ENCODE measurements at regions of chr5 and their contacts with region 1.

Region 1: DNA sequence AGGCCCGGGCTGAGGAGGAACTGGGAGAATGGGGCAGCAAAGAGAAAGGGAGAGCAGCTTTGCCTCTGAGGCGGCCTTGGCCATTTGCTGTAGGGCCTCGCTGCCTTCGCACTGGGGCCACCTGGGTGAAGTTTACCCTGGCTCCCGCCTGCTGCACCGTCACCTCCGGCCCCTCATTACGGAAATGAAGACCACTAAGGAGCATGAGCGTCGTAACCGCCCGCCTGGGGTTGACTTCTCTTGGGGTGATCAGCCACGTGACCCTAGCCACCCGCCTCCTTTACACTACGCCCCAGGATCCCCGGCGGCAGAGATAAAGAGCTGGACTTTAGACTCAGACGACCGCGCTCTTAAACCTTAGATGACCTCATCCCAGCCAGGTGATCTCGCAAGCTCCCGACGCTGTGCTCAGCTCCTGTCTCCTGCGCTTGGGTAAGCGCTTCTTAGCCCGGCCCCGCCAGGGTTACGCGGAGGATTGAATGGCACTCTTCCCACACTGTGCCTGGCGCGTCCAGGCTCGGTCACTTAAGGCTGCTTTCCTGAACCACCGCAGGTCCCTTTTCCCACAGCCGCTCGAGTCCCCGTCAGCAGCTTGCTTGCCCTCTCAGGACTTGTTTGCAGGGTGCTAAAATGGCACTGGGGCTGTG is 107.9 kb upstream of the LARP1 start:
- DNase-seq: peak; percentile 34 to 73
- H3K4me3 ChIP-seq: peak overlapping the region; percentile 11 to 53 (median 38); a peak in 7 of 8 replicates
- H3K27ac ChIP-seq: no peak overlapping the region
- H3K4me1 ChIP-seq: peaks cover 0 to 9% (median 5%) of the 10 kb centered on the region in 4 experiments; a peak in 4 of 7 replicates
- H3K27me3 ChIP-seq: peaks cover 0 to 19% (median 12%) of the 10 kb centered on the region in 4 experiments; a peak in 5 of 7 replicates
- CTCF ChIP-seq: no peak
- EP300 ChIP-seq: no peak
- POLR2A ChIP-seq: peak in 1 of 2 experiments; percentile 58; a peak in 1 of 3 replicates
- RAD21 ChIP-seq: no peak

Region 2: DNA sequence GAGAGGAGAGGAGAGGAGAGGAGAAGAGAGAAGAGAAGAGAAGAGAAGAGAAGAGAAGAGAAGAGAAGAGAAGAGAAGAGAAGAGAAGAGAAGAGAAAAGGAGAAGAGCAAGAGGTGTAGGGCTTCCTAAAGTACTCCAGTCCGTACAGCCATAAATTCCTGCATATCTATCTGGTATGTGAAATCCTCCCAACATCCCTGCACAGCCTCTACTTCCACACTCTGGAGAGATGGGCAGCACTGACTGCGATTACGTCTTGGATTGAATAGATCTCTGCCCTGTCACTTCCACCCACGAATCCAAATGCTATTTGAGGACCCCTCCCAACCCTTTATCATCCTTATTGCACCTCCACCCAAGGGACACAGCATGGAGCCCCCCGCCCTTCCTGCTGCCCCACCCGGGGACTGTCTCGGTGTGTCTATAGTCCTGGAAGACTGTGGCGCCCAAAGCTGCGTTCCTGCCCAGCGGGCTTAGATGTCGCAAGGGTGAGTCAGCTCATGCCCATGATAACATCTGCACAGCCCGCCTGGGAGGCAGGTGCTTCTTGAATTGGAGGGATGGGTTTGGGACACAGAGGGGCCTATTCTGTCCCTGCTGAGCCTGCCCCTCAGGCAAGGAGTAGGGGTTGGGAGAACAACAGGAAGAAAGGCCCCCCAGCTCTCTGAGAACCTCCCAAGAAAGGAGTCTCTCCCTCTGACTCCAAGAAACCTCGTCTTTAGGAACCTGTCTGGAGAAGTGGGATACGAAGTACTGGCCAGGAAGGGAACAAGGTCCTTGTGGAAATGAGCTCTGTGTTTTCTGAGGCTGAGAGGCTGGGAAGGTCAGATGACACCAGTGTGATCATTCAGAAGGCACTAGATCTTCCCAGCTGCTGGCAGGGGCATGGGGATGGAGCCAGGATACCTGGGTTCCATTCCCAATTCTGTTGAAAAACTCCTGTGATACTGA is 63.4 kb before region 1 on chr5:
- CTCF ChIA-PET with region 1: no interaction called
- POLR2A ChIA-PET with region 1: no interaction called
- DNase-seq: no peak
- H3K4me3 ChIP-seq: no peak overlapping the region
- H3K27ac ChIP-seq: no peak overlapping the region
- H3K4me1 ChIP-seq: peaks cover 0 to 2% (median 0%) of the 10 kb centered on the region in 4 experiments; a peak in 1 of 7 replicates
- H3K27me3 ChIP-seq: no peaks in the 10 kb centered on the region
- CTCF ChIP-seq: no peak
- EP300 ChIP-seq: no peak
- POLR2A ChIP-seq: no peak
- RAD21 ChIP-seq: no peak

Region 3: DNA sequence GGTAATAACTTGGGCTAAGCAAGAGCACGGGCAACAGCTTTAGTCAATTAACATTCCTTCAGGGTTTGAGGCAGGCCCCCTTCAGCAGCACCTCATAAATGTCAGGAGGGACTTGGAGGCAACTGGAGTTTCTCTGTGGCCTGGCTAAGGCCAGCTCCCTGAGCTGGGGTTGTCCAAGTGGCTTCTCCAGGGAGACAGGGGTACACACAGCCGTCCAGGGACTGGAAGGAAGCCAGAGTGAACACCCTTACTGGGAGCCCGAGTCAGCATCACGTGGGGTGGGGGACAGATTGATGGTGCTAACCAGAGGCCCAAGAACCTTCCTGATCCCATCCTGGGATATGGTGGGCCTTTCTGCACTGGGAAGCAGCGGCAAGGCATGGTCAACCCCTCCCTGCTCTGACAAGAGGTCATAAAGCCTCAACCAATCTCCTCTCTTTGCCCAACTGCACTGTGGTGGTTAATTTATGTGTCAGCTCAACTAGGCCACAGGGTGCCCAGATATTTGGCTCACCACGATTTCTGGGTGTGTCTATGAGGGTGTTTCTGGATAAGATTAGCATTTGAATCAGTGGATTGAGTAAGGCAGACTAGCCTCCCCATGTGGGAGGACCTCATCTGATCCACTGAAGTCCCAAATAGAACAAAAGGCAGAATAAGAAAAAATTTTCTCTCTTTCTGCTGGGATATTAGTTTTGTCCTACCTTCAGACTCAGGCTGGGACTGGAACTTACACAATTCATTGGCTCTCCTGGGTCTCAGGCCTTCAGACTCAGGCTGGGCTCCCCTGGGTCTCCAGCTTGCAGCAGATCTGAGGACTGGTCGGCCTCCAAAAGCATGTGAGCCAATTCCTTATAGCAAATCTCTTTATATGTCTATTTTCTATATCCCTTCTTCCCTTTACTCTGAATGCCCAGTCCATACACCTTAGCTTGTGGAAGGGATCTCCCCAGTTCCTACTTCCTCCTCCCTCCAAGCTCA is 19.2 kb before region 1 on chr5:
- CTCF ChIA-PET with region 1: interaction called, 15 read pairs
- POLR2A ChIA-PET with region 1: no interaction called
- DNase-seq: no peak
- H3K4me3 ChIP-seq: no peak overlapping the region
- H3K27ac ChIP-seq: peak overlapping the region; percentile 26; the same call in 1 of the 2 replicates
- H3K4me1 ChIP-seq: no peaks in the 10 kb centered on the region; a peak in 1 of 7 replicates
- H3K27me3 ChIP-seq: no peaks in the 10 kb centered on the region
- CTCF ChIP-seq: no peak
- EP300 ChIP-seq: no peak
- POLR2A ChIP-seq: no peak
- RAD21 ChIP-seq: no peak

Region 4: GRCh38 chr5:154677921-154678320 is 30.7 kb after region 1 on chr5:
- CTCF ChIA-PET with region 1: interaction called, 25 read pairs
- POLR2A ChIA-PET with region 1: interaction called, 3 read pairs
- DNase-seq: no peak
- H3K4me3 ChIP-seq: no peak overlapping the region
- H3K27ac ChIP-seq: no peak overlapping the region
- H3K4me1 ChIP-seq: peaks cover 0 to 2% (median 0%) of the 10 kb centered on the region in 4 experiments; a peak in 1 of 7 replicates
- H3K27me3 ChIP-seq: no peaks in the 10 kb centered on the region
- CTCF ChIP-seq: no peak
- EP300 ChIP-seq: no peak
- POLR2A ChIP-seq: no peak
- RAD21 ChIP-seq: no peak

Region 5: GRCh38 chr5:154783774-154784460 is 136.7 kb after region 1 on chr5:
- CTCF ChIA-PET with region 1: interaction called, 46 read pairs
- POLR2A ChIA-PET with region 1: no interaction called
- DNase-seq: no peak
- H3K4me3 ChIP-seq: no peak overlapping the region
- H3K27ac ChIP-seq: no peak overlapping the region
- H3K4me1 ChIP-seq: peaks cover 16 to 39% (median 32%) of the 10 kb centered on the region in 4 experiments
- H3K27me3 ChIP-seq: no peaks in the 10 kb centered on the region
- CTCF ChIP-seq: no peak
- EP300 ChIP-seq: no peak
- POLR2A ChIP-seq: no peak
- RAD21 ChIP-seq: no peak; a peak in 1 of 4 replicates

Region 6: DNA sequence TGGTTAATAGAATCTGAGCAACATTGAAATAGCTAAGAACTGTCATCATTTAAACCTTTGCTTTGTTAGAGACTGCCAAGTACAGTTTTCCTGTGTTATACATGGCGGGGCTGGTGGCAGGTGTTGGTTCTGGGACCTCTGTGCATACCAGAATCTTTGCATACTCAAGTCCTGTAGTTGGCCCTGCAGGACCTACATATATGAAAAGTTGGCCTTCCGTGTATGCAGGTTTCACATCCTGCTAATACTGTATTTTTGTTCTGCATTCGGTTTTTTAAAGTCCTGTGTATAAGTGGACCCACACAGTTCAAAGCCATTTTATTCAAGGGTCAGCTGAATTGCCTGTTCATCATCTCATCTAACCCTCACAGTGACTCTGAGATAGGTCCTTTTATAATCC is 144.3 kb after region 1 on chr5:
- CTCF ChIA-PET with region 1: interaction called, 46 read pairs
- POLR2A ChIA-PET with region 1: no interaction called
- DNase-seq: no peak
- H3K4me3 ChIP-seq: no peak overlapping the region
- H3K27ac ChIP-seq: no peak overlapping the region
- H3K4me1 ChIP-seq: peaks cover 0 to 5% (median 2%) of the 10 kb centered on the region in 4 experiments; a peak in 4 of 7 replicates
- H3K27me3 ChIP-seq: no peaks in the 10 kb centered on the region
- CTCF ChIP-seq: no peak
- EP300 ChIP-seq: no peak
- POLR2A ChIP-seq: no peak
- RAD21 ChIP-seq: no peak

Region 7: DNA sequence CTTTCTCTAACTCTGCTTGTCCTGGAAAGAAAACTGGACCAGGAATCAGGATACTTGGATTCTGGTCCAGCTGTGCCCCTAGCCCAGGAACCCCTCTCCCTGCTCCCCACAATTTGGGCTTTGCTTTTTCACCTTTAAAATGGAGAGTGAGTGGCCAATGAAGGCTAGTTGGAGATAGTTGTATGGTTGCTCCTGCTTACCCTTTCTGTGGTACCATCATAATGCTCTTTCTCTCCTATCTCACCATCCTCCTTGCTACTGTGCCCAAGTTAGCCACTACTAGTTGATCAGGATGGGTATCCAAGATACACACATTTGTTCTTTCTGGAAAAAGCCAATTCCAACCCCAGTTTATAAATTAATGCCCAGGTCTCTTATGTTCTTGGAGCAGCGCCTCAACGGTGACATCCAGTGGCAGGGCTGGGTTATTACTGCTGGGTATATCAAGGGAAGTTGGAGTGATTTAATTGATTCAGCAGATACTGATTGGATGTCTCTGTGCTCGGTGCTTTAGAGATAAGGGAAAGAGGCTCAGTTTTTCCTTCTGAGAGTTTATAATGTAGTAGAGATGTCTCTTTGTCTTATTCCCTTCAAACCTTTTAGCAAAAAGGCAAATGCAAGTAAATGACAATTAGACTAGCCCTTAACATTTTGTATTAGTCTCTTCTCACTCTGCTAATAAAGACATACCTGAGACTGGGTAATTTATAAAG is 164.6 kb after region 1 on chr5:
- CTCF ChIA-PET with region 1: interaction called, 12 read pairs
- POLR2A ChIA-PET with region 1: no interaction called
- DNase-seq: peak; percentile 17 to 72
- H3K4me3 ChIP-seq: no peak overlapping the region
- H3K27ac ChIP-seq: no peak overlapping the region
- H3K4me1 ChIP-seq: no peaks in the 10 kb centered on the region
- H3K27me3 ChIP-seq: no peaks in the 10 kb centered on the region
- CTCF ChIP-seq: peak; percentile 71 to 79 (median 72)
- EP300 ChIP-seq: no peak
- POLR2A ChIP-seq: no peak
- RAD21 ChIP-seq: peak; percentile 71 to 76